Heart right ventricle (tissue), 16 donors: ENCODE measurements at regions of chr9 and their contacts with region 1.

Region 1: GRCh38 chr9:96661711-96662110 is 6.6 kb upstream of the PRXL2C start:
- DNase-seq: no peak
- ATAC-seq: no peak
- H3K4me3 ChIP-seq: no peak overlapping the region
- H3K27ac ChIP-seq: no peak overlapping the region
- H3K4me1 ChIP-seq: peaks cover 0 to 10% (median under 1%) of the 10 kb centered on the region in 9 donors
- H3K27me3 ChIP-seq: no peaks in the 10 kb centered on the region
- CTCF ChIP-seq: no peak

Region 2: DNA sequence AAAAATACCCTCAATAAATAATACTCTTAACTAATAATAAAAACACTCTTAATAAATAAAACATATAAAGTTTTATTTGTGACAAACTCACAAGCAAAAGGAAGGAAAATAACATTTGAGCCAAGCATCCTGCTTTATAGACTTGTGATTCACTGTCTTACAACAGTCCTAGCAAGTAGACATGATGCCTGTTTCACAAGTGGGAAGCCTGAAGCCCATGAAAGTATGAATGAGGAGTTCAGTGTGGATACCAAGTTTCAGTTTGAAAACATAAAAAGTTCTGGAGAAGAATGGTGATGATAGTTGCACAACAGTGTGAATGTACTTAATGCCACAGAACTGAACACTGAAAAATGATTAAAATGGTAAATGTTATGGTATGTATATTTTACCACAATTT is 200.8 kb before region 1 on chr9:
- intact Hi-C with region 1: loop called in 4 of 10 experiments (anchors 10 kb)
- DNase-seq: no peak
- ATAC-seq: no peak
- H3K4me3 ChIP-seq: no peak overlapping the region
- H3K27ac ChIP-seq: no peak overlapping the region
- H3K4me1 ChIP-seq: peaks cover 0 to 7% (median 0%) of the 10 kb centered on the region in 9 donors
- H3K27me3 ChIP-seq: no peaks in the 10 kb centered on the region
- CTCF ChIP-seq: no peak

Region 3: GRCh38 chr9:96619491-96620154 is 42.1 kb before region 1 on chr9 and contains the start of gene CDC14B:
- intact Hi-C with region 1: no loop called
- DNase-seq: peak; percentile 87 to 89
- ATAC-seq: peak; percentile 71 to 85 (median 79)
- H3K4me3 ChIP-seq: peak within 1 kb of the TSS; percentile 46 to 91 (median 68)
- H3K27ac ChIP-seq: peak within 1 kb of the TSS; percentile 65 to 92 (median 84)
- H3K4me1 ChIP-seq: peaks cover 0 to 15% (median 4%) of the 10 kb centered on the region in 9 donors
- H3K27me3 ChIP-seq: peaks cover 0 to 54% (median 0%) of the 10 kb centered on the region in 7 donors
- CTCF ChIP-seq: peak in 1 of 9 donors; percentile 32
- total RNA-seq, gene CDC14B: 17.0 to 30.8 (median 27.0) TPM

Region 4: GRCh38 chr9:97740848-97741821 is 1079.4 kb after region 1 on chr9:
- intact Hi-C with region 1: no loop called
- DNase-seq: peak; percentile 64 to 75
- ATAC-seq: peak; percentile 77 to 95 (median 93)
- H3K4me3 ChIP-seq: peak overlapping the region in 9 of 10 donors; percentile 28 to 60 (median 43)
- H3K27ac ChIP-seq: peak overlapping the region in 7 of 10 donors; percentile 4 to 72 (median 36)
- H3K4me1 ChIP-seq: peaks cover 0 to 15% (median 11%) of the 10 kb centered on the region in 9 donors
- H3K27me3 ChIP-seq: peaks cover 0 to 83% (median 42%) of the 10 kb centered on the region in 7 donors
- CTCF ChIP-seq: peak in 6 of 9 donors; percentile 8 to 39 (median 35)